Dorsolateral prefrontal cortex (tissue), 120 donors: ENCODE measurements at regions of chr1 and their contacts with region 1.

Region 1: GRCh38 chr1:33930346-33931110 is 66.6 kb downstream of the HMGB4 start:
- DNase-seq: peak in 1 of 10 donors; percentile 23
- H3K4me3 ChIP-seq: no peak overlapping the region
- H3K27ac ChIP-seq: no peak overlapping the region
- H3K27me3 ChIP-seq: no peaks in the 10 kb centered on the region
- CTCF ChIP-seq: no peak

Region 2: GRCh38 chr1:33960188-33960895 is 29.8 kb after region 1 on chr1:
- intact Hi-C with region 1: loop called in 1 of 2 experiments (anchors 1 kb)
- DNase-seq: no peak
- H3K4me3 ChIP-seq: no peak overlapping the region
- H3K27ac ChIP-seq: no peak overlapping the region
- H3K27me3 ChIP-seq: peaks cover 0 to 4% (median 0%) of the 10 kb centered on the region in 45 donors
- CTCF ChIP-seq: no peak